Left cardiac atrium (tissue), 4 donors: ENCODE measurements at regions of chr2 and their contacts with region 1.

Region 1: DNA sequence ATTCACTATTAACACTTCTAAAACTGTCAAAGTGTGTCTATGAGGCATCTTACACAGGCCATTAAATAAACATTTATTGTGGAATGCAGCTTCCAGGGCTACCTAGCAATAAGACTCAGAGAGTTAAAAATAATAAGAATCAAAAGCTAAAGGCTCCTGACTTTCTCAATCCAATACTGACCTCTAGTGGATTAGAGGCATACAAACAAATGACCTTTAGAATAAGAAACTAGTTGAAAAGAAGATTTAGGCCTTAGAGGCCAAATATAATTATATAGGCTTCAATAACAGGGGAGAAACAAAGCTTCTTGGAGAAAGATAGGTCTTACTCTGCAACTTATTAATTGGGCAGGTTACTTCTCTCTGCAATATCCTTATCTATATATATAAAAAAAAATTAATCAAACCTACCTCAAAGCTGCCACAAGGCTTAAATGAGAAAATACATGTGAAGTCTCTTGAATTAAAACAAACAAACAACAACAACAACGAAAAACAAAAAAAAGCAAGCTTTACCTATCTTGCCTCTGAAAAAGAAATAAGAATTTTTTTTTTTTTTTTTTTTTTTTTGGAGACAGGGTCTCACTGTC is 246.1 kb downstream of the EXOC6B start:
- DNase-seq: no peak
- ATAC-seq: peak; percentile 38 to 47

Region 2: GRCh38 chr2:71545572-71546274 is 1034.0 kb before region 1 on chr2:
- intact Hi-C with region 1: loop called in 1 of 2 experiments (anchors 10 kb)
- DNase-seq: peak; percentile 56
- ATAC-seq: peak; percentile 68 to 80

Region 3: GRCh38 chr2:71923887-71924533 is 655.7 kb before region 1 on chr2:
- intact Hi-C with region 1: loop called (anchors 10 kb)
- DNase-seq: peak; percentile 65
- ATAC-seq: peak; percentile 87 to 88

Region 4: GRCh38 chr2:72150157-72150865 is 429.4 kb before region 1 on chr2:
- intact Hi-C with region 1: loop called in 1 of 2 experiments (anchors 10 kb)
- DNase-seq: peak; percentile 70
- ATAC-seq: peak; percentile 65 to 77

Region 5: DNA sequence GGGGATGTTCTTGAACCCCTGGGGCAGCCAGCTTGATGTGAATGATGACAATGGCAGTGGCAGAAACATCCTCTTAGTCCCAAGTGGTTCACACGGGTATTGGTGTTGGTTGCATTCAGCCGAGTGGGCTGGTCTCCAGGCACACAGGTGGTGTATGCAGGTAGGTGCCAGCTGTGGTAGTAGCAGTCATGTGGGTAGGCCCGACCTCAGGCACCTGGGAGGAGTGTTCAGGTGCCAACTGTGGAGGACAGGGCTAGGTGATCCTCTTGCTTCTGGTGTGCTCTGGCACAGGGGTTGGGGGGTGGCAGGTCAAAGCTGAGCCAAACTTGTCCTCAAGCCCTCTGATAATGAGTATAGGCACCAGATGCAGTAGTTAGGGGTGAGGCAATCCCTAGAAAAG is 104.4 kb before region 1 on chr2:
- intact Hi-C with region 1: no loop called
- DNase-seq: no peak
- ATAC-seq: no peak

Region 6: GRCh38 chr2:72745679-72746368 is 166.1 kb after region 1 on chr2:
- intact Hi-C with region 1: loop called in 1 of 2 experiments (anchors 10 kb)
- DNase-seq: no peak
- ATAC-seq: peak in 1 of 2 donors; percentile 48